ENCODE measurements at regions of chr6 and their contacts with region 1.

Region 1: DNA sequence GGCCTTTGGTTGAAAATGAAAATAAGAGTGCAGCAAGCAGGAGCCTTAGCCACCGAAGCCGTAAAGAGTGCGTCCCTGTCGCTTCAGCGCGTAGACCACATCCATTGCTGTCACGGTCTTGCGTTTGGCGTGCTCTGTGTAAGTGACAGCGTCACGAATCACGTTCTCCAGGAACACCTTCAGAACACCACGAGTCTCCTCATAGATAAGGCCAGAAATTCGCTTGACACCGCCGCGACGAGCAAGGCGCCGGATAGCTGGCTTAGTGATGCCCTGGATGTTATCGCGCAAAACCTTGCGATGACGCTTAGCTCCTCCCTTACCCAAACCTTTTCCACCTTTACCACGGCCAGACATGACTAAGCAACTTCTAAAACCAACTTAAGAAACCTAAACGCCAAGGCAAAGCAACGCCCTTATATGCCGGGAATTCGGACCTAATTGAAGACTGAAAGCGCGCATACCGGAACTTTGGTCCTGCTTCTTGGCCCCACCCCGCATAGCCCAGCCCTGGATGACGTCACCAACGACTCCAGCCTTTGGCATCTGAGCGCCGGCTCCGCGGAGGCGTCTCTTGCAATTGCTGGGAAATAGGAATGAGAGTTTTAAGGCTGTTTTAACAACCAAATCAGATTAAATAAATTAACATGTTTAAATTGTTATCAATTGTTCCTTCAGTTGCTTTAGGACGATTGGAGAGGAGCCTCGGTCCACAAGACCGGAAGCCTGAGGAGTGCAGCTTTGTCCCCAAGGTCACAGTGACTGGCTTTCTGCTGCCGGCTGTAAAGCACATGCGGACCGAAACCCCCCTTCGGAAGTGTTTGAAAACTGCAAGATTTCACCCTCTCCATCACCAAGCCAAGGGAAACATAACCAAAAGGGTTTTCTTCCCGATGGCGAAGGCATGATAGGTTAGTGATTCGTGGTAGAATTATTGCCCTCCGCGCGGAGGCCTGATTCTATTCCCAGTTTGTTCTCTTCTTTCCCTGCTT is 79.6 kb upstream of the BTN3A2 start:
- DNase-seq: peak; percentile 94 to 100
- H3K4me3 ChIP-seq: peak overlapping the region; percentile 74 to 95 (median 80)
- H3K27ac ChIP-seq: peak overlapping the region; percentile 96
- H3K4me1 ChIP-seq: peaks cover 0 to 7% (median 2%) of the 10 kb centered on the region in 4 experiments; a peak in 1 of 7 replicates
- H3K27me3 ChIP-seq: no peaks in the 10 kb centered on the region
- CTCF ChIP-seq: no peak
- EP300 ChIP-seq: peak in 1 of 2 experiments; percentile 97; a peak in 2 of 3 replicates
- POLR2A ChIP-seq: peak; percentile 100
- RAD21 ChIP-seq: no peak

Region 2: DNA sequence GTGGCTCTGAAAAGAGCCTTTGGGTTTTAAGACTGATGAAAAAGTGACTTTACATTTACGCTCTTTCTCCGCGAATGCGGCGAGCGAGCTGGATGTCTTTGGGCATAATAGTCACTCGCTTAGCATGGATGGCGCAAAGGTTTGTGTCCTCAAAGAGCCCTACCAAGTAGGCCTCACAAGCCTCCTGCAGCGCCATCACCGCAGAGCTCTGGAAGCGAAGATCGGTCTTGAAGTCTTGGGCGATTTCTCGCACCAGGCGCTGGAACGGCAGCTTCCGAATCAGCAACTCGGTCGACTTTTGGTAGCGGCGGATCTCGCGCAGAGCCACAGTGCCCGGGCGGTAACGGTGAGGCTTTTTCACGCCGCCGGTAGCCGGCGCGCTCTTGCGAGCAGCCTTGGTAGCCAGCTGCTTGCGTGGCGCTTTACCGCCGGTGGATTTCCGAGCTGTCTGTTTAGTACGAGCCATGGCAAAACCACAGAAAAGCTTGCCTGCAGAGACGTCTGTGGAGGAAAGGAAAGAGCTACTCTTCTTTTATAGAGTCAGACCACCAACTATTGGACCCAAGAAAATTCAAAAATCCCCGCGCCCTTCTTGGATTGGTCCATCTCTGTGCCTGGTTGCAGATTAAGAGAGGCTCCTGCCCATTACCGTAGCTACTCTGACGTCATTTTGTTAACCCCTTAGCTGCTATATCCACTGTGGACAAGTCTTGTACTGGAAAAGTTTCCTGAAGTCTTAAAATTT is 253.7 kb before region 1 on chr6:
- CTCF ChIA-PET with region 1: no interaction called
- POLR2A ChIA-PET with region 1: interaction called, 19 read pairs
- DNase-seq: peak; percentile 82 to 88
- H3K4me3 ChIP-seq: peak overlapping the region; percentile 81 to 95 (median 92)
- H3K27ac ChIP-seq: peak overlapping the region; percentile 96
- H3K4me1 ChIP-seq: peaks cover 2 to 18% (median 13%) of the 10 kb centered on the region in 4 experiments; a peak in 5 of 7 replicates
- H3K27me3 ChIP-seq: no peaks in the 10 kb centered on the region
- CTCF ChIP-seq: no peak
- EP300 ChIP-seq: peak in 1 of 2 experiments; percentile 2; a peak in 1 of 3 replicates
- POLR2A ChIP-seq: peak; percentile 99 to 100
- RAD21 ChIP-seq: no peak

Region 3: DNA sequence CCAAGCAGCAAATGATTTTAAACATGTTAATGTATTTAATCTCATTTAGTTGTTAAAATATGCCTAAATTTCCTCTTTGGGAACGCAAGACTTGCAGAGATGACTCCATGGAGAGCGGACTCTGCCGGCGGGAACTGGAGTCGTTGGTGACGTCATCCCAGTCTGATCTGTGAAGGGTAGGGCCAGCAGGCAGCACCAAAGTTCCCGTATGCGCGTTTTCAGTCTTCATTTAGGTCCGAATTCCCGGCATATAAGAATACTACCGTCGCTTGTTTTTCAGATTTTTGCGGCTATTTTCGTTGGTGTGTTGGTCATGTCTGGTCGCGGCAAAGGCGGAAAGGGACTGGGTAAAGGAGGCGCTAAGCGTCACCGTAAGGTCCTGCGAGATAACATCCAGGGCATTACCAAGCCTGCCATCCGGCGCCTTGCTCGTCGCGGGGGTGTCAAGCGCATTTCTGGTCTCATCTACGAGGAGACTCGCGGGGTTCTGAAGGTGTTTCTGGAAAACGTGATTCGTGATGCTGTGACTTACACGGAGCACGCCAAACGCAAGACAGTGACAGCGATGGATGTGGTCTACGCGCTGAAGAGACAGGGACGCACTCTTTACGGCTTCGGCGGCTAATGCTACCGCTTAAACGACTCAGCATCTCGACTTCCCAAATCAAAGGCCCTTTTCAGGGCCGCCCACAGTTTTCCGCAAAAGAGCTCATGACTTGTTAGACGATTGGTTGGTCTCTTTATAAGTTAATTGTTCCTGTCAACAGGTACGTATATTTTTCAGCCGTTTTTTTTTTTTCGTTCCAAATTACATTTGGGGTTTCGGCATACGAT is 80.9 kb before region 1 on chr6:
- CTCF ChIA-PET with region 1: interaction called, 3 read pairs
- POLR2A ChIA-PET with region 1: interaction called, 197 read pairs
- DNase-seq: peak; percentile 88 to 97
- H3K4me3 ChIP-seq: peak overlapping the region; percentile 64 to 94 (median 82)
- H3K27ac ChIP-seq: peak overlapping the region; percentile 98
- H3K4me1 ChIP-seq: peaks cover 0 to 15% (median 5%) of the 10 kb centered on the region in 4 experiments; a peak in 6 of 7 replicates
- H3K27me3 ChIP-seq: no peaks in the 10 kb centered on the region
- CTCF ChIP-seq: peak in 1 of 3 experiments; percentile 18; a peak in 1 of 4 replicates
- EP300 ChIP-seq: peak; percentile 13 to 95; a peak in 2 of 3 replicates
- POLR2A ChIP-seq: peak; percentile 99 to 100
- RAD21 ChIP-seq: 0 out of 4 replicates have a peak, but pooled peaks of 1 of the 2 experiments have one; percentile 14

Region 4: GRCh38 chr6:26240154-26241032 is 45.0 kb before region 1 on chr6:
- CTCF ChIA-PET with region 1: interaction called, 4 read pairs
- POLR2A ChIA-PET with region 1: interaction called, 96 read pairs
- DNase-seq: peak in 1 of 2 experiments; percentile 78
- H3K4me3 ChIP-seq: peak overlapping the region; percentile 64 to 96 (median 87)
- H3K27ac ChIP-seq: peak overlapping the region; percentile 96
- H3K4me1 ChIP-seq: peaks cover 1 to 8% (median 4%) of the 10 kb centered on the region in 4 experiments; a peak in 6 of 7 replicates
- H3K27me3 ChIP-seq: no peaks in the 10 kb centered on the region
- CTCF ChIP-seq: no peak
- EP300 ChIP-seq: peak in 1 of 2 experiments; percentile 87; a peak in 1 of 3 replicates
- POLR2A ChIP-seq: peak; percentile 100
- RAD21 ChIP-seq: no peak

Region 5: DNA sequence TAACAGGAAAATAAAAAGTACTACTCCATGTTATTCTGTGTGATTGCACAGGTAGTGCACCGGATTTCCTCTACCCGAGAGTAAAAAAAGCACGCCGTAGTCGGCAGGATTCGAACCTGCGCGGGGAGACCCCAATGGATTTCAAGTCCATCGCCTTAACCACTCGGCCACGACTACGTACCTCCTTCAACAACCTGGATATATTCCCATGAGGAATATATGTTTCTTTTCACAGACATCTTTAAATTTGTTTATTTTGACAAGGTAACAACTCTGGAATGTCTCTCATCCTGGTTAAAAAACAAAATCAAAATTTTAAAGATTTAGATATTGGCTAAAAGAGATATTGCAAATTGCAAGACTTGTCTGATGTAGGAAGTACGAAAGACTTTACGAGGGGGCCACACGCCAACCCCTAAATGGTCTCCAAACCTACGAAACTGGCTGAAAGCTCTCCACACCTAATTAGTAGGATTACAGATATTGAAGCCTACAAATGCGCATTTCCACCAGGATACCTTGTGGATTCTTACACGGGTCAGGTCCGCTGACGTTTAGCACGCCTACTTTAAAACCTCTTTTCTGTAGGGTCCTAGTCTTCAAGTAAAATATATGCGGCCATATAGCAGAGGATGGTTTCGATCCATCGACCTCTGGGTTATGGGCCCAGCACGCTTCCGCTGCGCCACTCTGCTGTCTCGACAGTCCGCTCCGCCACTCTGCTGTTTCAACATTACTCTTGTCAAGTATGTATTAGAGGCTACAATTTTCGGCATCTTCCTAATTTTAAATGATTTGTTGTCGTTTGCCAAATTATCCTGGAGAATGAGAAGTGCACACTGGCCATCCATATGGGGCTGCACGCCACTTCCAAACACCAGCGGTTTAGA is 27.3 kb after region 1 on chr6:
- CTCF ChIA-PET with region 1: no interaction called
- POLR2A ChIA-PET with region 1: interaction called, 16 read pairs
- DNase-seq: peak in 1 of 2 experiments; percentile 92
- H3K4me3 ChIP-seq: peak overlapping the region; percentile 70 to 95 (median 84)
- H3K27ac ChIP-seq: no peak overlapping the region
- H3K4me1 ChIP-seq: no peaks in the 10 kb centered on the region
- H3K27me3 ChIP-seq: no peaks in the 10 kb centered on the region
- CTCF ChIP-seq: no peak
- EP300 ChIP-seq: no peak
- POLR2A ChIP-seq: no peak
- RAD21 ChIP-seq: no peak

Region 6: GRCh38 chr6:26464416-26465131 is 179.1 kb after region 1 on chr6:
- CTCF ChIA-PET with region 1: no interaction called
- POLR2A ChIA-PET with region 1: no interaction called
- DNase-seq: no peak
- H3K4me3 ChIP-seq: no peak overlapping the region
- H3K27ac ChIP-seq: no peak overlapping the region
- H3K4me1 ChIP-seq: no peaks in the 10 kb centered on the region
- H3K27me3 ChIP-seq: no peaks in the 10 kb centered on the region
- CTCF ChIP-seq: no peak
- EP300 ChIP-seq: no peak
- POLR2A ChIP-seq: no peak
- RAD21 ChIP-seq: no peak

Region 7: GRCh38 chr6:27138837-27139755 is 853.7 kb after region 1 on chr6:
- CTCF ChIA-PET with region 1: no interaction called
- POLR2A ChIA-PET with region 1: interaction called, 52 read pairs
- DNase-seq: peak; percentile 91 to 92
- H3K4me3 ChIP-seq: peak overlapping the region; percentile 50 to 95 (median 70)
- H3K27ac ChIP-seq: peak overlapping the region; percentile 95
- H3K4me1 ChIP-seq: peaks cover 0 to 10% (median 4%) of the 10 kb centered on the region in 4 experiments; a peak in 5 of 7 replicates
- H3K27me3 ChIP-seq: no peaks in the 10 kb centered on the region
- CTCF ChIP-seq: no peak
- EP300 ChIP-seq: peak; percentile 40 to 99
- POLR2A ChIP-seq: peak; percentile 91 to 99
- RAD21 ChIP-seq: no peak

Measured in H1 (cell line).